ENCODE measurements at regions of chr10 and their contacts with region 1.

Region 1: GRCh38 chr10:22436884-22437619 is 91.8 kb downstream of the SPAG6 start:
- DNase-seq: peak; percentile 84 to 96 (median 90)
- ATAC-seq: peak; percentile 86
- H3K4me3 ChIP-seq: peak overlapping the region; percentile 88 to 93
- H3K4me3 Mint-ChIP-seq: peak overlapping the region; percentile 96
- H3K27ac ChIP-seq: peak overlapping the region; percentile 93 to 94
- H3K27ac Mint-ChIP-seq: peak overlapping the region; percentile 98
- H3K4me1 ChIP-seq: peaks cover 20% of the 10 kb centered on the region
- H3K4me1 Mint-ChIP-seq: peaks cover 29% of the 10 kb centered on the region
- H3K27me3 ChIP-seq: no peaks in the 10 kb centered on the region
- H3K27me3 Mint-ChIP-seq: no peaks in the 10 kb centered on the region
- CTCF ChIP-seq: no peak

Region 2: DNA sequence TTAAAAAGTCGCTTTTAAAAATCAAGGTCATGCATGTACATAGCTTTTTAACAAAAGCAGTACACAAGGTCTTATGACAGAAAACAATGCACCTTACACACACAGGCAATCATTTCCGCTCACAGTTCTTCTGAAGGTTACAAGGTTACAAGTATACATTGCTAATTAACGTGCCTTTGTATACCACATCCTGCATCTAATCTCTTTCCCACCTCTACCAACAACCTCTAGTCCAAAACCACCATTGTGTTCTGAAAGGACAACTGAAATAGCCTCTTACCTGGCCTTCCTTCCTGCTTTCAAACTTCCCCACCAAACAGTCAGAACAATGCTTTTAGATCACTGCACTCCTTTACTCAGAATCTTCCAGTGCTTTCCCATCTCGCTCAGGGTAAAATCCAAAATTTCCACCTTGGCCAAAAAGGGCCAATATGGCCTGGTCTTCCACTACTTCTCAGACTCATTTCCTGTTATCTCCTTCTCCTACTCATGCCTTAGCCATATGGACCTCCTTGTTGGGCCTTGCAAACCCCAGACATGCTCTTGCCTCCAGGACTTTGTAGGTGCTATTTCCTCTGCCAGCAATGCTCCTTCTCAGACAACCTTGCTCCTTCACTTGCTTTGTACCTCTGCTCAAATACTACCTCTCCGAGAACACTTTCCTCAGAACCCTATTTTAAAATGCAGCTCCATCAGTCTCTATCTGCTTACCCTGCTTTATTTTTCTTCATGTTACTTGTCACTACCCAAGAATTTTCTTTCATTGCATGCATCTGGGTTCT is 638.9 kb before region 1 on chr10:
- CTCF ChIA-PET with region 1: no interaction called
- POLR2A ChIA-PET with region 1: no interaction called
- intact Hi-C with region 1: no loop called
- DNase-seq: peak in 2 of 9 experiments; percentile 10 to 50
- ATAC-seq: peak; percentile 79
- H3K4me3 ChIP-seq: no peak overlapping the region
- H3K4me3 Mint-ChIP-seq: no peak overlapping the region
- H3K27ac ChIP-seq: peak overlapping the region in 1 of 2 experiments; percentile 36
- H3K27ac Mint-ChIP-seq: peak overlapping the region; percentile 85
- H3K4me1 ChIP-seq: peaks cover 7% of the 10 kb centered on the region
- H3K4me1 Mint-ChIP-seq: peaks cover 15% of the 10 kb centered on the region
- H3K27me3 ChIP-seq: no peaks in the 10 kb centered on the region
- H3K27me3 Mint-ChIP-seq: no peaks in the 10 kb centered on the region
- CTCF ChIP-seq: no peak

Region 3: GRCh38 chr10:22003079-22003913 is 433.8 kb before region 1 on chr10 and contains the start of gene DNAJC1:
- CTCF ChIA-PET with region 1: interaction called, 5 read pairs
- POLR2A ChIA-PET with region 1: interaction called, 31 read pairs
- intact Hi-C with region 1: loop called (anchors 1 to 2 kb)
- DNase-seq: peak; percentile 96 to 99 (median 98)
- ATAC-seq: peak; percentile 90
- H3K4me3 ChIP-seq: peak within 1 kb of the TSS; percentile 71 to 95
- H3K4me3 Mint-ChIP-seq: peak within 1 kb of the TSS; percentile 95
- H3K27ac ChIP-seq: peak within 1 kb of the TSS; percentile 80 to 85
- H3K27ac Mint-ChIP-seq: peak within 1 kb of the TSS; percentile 94
- H3K4me1 ChIP-seq: peaks cover 16% of the 10 kb centered on the region
- H3K4me1 Mint-ChIP-seq: peaks cover 48% of the 10 kb centered on the region
- H3K27me3 ChIP-seq: no peaks in the 10 kb centered on the region
- H3K27me3 Mint-ChIP-seq: peaks cover 2% of the 10 kb centered on the region
- CTCF ChIP-seq: no peak
- total RNA-seq, gene DNAJC1: 15.3 to 18.1 TPM

Region 4: DNA sequence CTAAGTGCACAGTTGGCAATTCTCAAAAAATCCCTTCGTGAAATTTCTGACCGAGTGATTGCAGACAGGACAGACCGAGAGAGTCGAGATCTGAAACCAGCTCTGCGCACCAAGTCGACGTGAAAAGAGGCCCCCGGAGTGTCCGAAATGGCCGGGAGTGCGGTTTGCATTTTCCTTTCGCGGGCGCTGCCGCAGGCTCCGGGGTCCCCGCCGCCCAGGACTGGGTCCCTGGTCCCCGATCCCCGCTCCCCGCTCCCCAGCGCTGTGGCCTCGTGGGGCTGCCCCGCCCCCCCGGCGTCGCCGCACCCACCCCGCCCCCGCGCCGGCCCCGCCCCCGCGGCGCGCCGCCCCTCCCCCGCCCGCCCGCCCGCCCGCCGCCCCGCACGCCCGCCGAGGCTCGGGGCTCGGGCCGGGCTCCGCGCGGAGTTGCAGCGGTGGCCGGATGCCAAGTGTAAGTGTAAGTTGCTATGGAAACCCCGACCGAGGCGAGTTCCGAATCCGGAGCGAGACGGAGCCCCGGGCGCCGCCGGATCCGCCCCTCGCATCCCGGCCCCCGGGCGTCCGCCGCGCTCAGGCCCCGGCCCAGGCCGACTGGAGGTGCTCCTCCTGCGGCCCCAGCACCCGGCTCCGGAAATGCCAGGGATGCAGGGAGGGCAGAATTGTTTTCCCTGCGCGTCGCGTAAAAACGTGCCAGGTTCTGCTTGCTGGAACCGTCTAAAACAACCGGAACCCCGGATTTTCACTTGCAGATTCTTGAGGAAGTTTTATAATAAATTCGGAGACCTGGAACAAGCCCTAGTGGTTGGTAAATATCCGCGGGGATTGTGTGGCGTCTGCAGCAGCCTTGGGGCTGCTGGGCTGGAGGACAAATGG is 111.5 kb before region 1 on chr10:
- CTCF ChIA-PET with region 1: no interaction called
- POLR2A ChIA-PET with region 1: interaction called, 24 read pairs
- intact Hi-C with region 1: no loop called
- DNase-seq: peak in 8 of 9 experiments; percentile 62 to 92 (median 78)
- ATAC-seq: peak; percentile 26
- H3K4me3 ChIP-seq: peak overlapping the region; percentile 43 to 57
- H3K4me3 Mint-ChIP-seq: peak overlapping the region; percentile 80
- H3K27ac ChIP-seq: peak overlapping the region; percentile 46 to 51
- H3K27ac Mint-ChIP-seq: peak overlapping the region; percentile 88
- H3K4me1 ChIP-seq: peaks cover 33% of the 10 kb centered on the region
- H3K4me1 Mint-ChIP-seq: peaks cover 40% of the 10 kb centered on the region
- H3K27me3 ChIP-seq: peaks cover 20 to 21% of the 10 kb centered on the region in 2 experiments
- H3K27me3 Mint-ChIP-seq: peaks cover 38% of the 10 kb centered on the region
- CTCF ChIP-seq: no peak

Region 5: DNA sequence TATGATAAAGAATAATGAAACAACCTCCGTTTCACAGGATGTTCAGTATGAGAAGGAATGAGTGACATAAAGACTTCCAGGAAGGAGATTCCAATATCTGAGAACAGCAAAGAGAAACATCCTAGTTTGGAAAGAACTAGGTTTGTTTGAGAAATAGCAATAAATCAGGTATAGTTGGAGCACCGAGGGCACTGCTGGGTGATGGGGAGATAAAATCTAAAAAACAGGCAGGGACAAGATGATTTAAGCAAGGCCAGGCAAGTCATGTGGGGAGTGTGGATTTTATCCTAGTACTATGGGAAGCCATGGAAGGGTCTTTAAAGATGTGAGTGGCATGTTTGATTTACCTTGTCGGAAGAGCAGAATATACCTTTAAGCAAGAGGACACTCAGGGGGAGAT is 78.0 kb after region 1 on chr10:
- CTCF ChIA-PET with region 1: no interaction called
- POLR2A ChIA-PET with region 1: no interaction called
- intact Hi-C with region 1: no loop called
- DNase-seq: no peak
- ATAC-seq: no peak
- H3K4me3 ChIP-seq: no peak overlapping the region
- H3K4me3 Mint-ChIP-seq: no peak overlapping the region
- H3K27ac ChIP-seq: no peak overlapping the region
- H3K27ac Mint-ChIP-seq: no peak overlapping the region
- H3K4me1 ChIP-seq: no peaks in the 10 kb centered on the region
- H3K4me1 Mint-ChIP-seq: no peaks in the 10 kb centered on the region
- H3K27me3 ChIP-seq: peaks cover 0 to 2% of the 10 kb centered on the region in 2 experiments
- H3K27me3 Mint-ChIP-seq: peaks cover 20% of the 10 kb centered on the region
- CTCF ChIP-seq: no peak

Region 6: GRCh38 chr10:22550732-22551131 is 113.7 kb after region 1 on chr10:
- CTCF ChIA-PET with region 1: no interaction called
- POLR2A ChIA-PET with region 1: interaction called, 9 read pairs
- intact Hi-C with region 1: loop called in 1 of 2 experiments (anchors 5 kb)
- DNase-seq: peak; percentile 37 to 83 (median 75)
- ATAC-seq: peak; percentile 79
- H3K4me3 ChIP-seq: no peak overlapping the region
- H3K4me3 Mint-ChIP-seq: no peak overlapping the region
- H3K27ac ChIP-seq: no peak overlapping the region
- H3K27ac Mint-ChIP-seq: peak overlapping the region; percentile 67
- H3K4me1 ChIP-seq: no peaks in the 10 kb centered on the region
- H3K4me1 Mint-ChIP-seq: peaks cover 30% of the 10 kb centered on the region
- H3K27me3 ChIP-seq: no peaks in the 10 kb centered on the region
- H3K27me3 Mint-ChIP-seq: no peaks in the 10 kb centered on the region
- CTCF ChIP-seq: peak; percentile 81

Region 7: DNA sequence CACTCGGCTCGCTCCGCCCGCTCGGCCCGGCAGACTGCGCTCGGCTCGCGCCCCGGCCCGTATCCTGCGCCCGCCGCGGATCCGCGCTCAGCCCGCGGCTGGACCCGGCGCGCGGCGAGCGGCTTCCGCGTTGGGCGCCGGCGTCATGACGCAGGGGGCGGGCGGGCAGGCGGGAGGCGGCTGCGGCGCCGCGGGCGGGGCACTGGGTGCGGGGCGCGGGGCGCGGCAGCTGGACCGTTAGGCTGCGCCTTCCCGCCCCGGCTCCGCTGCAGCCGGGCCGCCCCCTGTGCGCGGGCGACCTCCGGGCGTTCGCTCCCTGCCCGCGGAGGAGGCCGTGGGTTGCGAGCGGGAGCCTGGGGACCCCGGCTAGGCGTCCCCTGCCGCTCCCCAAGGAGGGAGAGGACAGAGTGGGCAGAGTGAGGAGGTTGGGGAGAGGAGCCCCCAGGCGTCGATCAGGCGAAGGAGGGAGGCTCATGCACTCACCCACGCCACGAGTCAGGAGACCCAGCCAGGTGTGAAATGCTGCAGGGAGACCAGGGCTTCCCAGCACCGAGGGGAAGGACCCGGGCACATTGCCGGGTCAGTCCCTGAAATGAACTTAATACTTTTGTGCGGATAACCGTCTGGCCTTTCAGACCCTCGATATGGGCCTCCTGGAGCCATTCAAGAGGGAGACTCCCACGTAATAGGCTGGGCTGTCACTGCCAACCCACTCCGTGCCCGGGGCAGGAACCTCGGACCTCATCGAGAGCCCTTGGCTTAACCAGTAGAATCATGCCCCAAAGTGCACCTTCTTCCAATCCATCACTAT is 277.6 kb after region 1 on chr10 and contains the start of gene PIP4K2A:
- CTCF ChIA-PET with region 1: no interaction called
- POLR2A ChIA-PET with region 1: no interaction called
- intact Hi-C with region 1: loop called (anchors 2 to 10 kb)
- DNase-seq: peak; percentile 43 to 92 (median 75)
- ATAC-seq: peak; percentile 76
- H3K4me3 ChIP-seq: peak within 1 kb of the TSS; percentile 72 to 95
- H3K4me3 Mint-ChIP-seq: peak within 1 kb of the TSS; percentile 94
- H3K27ac ChIP-seq: peak within 1 kb of the TSS; percentile 78 to 81
- H3K27ac Mint-ChIP-seq: peak within 1 kb of the TSS; percentile 92
- H3K4me1 ChIP-seq: peaks cover 25% of the 10 kb centered on the region
- H3K4me1 Mint-ChIP-seq: peaks cover 30% of the 10 kb centered on the region
- H3K27me3 ChIP-seq: no peaks in the 10 kb centered on the region
- H3K27me3 Mint-ChIP-seq: no peaks in the 10 kb centered on the region
- CTCF ChIP-seq: no peak
- total RNA-seq, gene PIP4K2A: 82.5 to 89.5 TPM

Region 8: DNA sequence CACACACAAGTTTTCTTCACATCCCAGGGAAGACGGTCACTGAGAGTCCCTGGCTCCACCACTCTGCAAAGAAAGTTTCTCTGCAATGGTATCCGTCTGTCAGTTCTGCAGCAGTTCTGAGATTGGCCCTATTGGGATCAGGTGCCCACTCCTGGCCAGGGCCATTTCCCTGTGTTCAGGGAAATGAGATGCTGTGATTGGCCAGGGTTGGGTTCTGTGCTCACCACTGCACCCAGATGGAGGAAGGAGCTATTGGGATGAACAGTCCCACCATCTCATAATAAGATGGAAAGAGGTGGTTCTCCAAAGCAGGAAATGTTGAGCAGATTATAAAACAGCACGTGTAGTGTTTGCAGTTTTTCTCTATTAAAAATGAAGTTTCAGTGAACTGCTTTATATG is 290.6 kb after region 1 on chr10:
- CTCF ChIA-PET with region 1: no interaction called
- POLR2A ChIA-PET with region 1: no interaction called
- intact Hi-C with region 1: no loop called
- DNase-seq: no peak
- ATAC-seq: no peak
- H3K4me3 ChIP-seq: no peak overlapping the region
- H3K4me3 Mint-ChIP-seq: no peak overlapping the region
- H3K27ac ChIP-seq: no peak overlapping the region
- H3K27ac Mint-ChIP-seq: no peak overlapping the region
- H3K4me1 ChIP-seq: no peaks in the 10 kb centered on the region
- H3K4me1 Mint-ChIP-seq: peaks cover 19% of the 10 kb centered on the region
- H3K27me3 ChIP-seq: no peaks in the 10 kb centered on the region
- H3K27me3 Mint-ChIP-seq: no peaks in the 10 kb centered on the region
- CTCF ChIP-seq: no peak